HEK293 (cell line): ENCODE measurements at regions of chr5 and their contacts with region 1.

Region 1: GRCh38 chr5:159515909-159516415 is 185.7 kb upstream of the IL12B start:
- H3K4me3 ChIP-seq: no peak overlapping the region
- H3K27ac ChIP-seq: no peak overlapping the region
- H3K4me1 ChIP-seq: no peaks in the 10 kb centered on the region
- CTCF ChIP-seq: peak; percentile 58; the same call in 1 of the 2 replicates

Region 2: DNA sequence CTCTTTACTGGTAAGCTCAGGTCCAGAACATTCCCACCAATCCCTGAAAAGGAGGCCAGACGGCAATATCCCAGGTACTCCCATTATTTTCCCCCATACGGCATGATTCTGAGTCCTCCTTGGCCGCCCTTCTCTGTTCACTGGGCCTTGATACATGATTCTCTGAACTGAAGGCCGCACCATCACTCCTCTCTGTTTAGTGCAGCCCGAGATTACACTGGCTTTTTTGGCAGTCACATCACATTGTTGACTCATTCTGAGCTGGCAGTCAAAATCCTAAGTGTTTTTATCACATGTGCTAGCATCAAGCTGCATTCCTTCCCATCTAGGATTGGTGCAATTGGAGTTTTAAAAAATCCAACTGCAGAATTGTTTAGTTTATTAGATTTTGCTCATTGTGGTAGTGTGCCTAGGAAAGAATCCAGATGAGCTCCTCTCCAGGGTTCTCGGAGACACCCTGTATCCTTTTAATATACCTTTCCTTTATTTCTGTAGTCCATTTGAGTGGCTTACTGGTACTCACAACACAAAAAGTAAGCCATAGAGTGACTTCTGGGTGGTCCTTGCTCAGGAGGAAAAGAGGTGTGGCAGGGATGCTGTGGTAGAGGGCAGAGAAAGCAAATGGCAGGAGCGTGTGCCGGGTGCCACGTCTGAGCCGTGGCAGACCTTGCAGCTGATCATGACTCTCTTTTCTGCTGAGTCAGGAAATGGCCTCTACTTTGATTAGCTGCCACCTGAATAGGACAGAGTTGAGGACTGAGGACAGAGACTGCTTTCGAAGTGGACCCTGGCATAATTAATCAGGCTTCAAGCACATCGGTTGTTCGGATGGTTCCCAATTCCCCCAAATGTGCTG is 64.5 kb before region 1 on chr5:
- CTCF ChIA-PET with region 1: interaction called, 15 read pairs
- POLR2A ChIA-PET with region 1: no interaction called
- H3K4me3 ChIP-seq: no peak overlapping the region
- H3K27ac ChIP-seq: no peak overlapping the region; the same call in 1 of the 2 replicates
- H3K4me1 ChIP-seq: peaks cover 16% of the 10 kb centered on the region
- CTCF ChIP-seq: no peak